HepG2 (cell line): ENCODE measurements at regions of chr1 and their contacts with region 1.

Region 1: DNA sequence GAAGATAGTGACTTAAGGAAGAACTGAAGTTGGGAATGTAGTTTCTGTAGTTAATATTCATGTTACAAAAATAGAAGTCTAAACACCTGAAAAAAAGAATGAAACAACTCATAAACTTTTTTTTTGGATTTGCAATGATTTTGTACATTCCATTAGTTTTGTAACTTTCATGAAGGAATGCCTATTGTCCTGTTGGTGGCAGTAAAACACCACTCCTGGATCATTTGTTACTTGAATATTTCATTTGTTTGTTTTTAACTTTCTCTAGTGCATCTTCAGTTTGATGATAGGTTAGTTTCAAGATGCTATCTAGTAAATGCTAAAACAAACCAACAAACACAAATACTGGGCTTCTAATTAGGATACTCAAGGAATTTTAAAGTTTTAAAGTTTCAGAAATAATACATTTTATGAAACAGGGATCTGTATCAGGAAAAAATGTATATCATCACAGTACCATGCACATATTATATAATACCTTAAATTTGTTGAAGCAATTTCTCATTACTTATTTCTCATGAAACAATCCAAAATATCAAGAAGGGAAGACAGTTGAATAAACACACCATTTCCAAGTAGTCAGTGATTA is 229.7 kb upstream of the CACYBP start:
- DNase-seq: peak; percentile 49
- ATAC-seq: no peak; the same call in 2 of the 3 replicates
- H3K4me3 ChIP-seq: no peak overlapping the region
- H3K27ac ChIP-seq: no peak overlapping the region
- H3K4me1 ChIP-seq: peaks cover 10% of the 10 kb centered on the region; the same call in 1 of the 2 replicates
- H3K27me3 ChIP-seq: no peaks in the 10 kb centered on the region
- CTCF ChIP-seq: peak; percentile 73
- EP300 ChIP-seq: no peak
- POLR2A ChIP-seq: no peak
- RAD21 ChIP-seq: peak; percentile 55; the same call in 1 of the 2 replicates

Region 2: DNA sequence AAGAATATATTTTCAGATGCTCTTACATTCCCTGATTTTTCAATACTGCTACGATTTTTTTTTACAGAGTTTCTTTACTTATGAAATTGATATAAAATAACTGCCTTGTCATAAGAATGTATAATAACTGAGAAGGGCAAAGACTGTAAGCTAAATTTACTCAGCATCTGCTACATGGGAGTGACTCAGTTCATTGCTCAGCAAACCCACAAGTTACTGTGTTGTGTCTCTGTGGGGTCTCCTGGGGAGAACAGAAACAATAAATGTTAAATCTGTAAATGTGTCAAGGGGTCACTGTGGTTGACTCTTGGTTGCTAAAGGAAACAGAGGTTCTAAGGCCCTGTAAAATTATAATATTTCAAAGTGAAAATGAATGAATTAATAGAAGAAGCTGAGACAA is 19.3 kb after region 1 on chr1:
- CTCF ChIA-PET with region 1: no interaction called
- POLR2A ChIA-PET with region 1: no interaction called
- in situ Hi-C with region 1: no loop called
- intact Hi-C with region 1: no loop called
- DNase-seq: no peak
- ATAC-seq: no peak
- H3K4me3 ChIP-seq: no peak overlapping the region
- H3K27ac ChIP-seq: no peak overlapping the region
- H3K4me1 ChIP-seq: no peaks in the 10 kb centered on the region
- H3K27me3 ChIP-seq: no peaks in the 10 kb centered on the region
- CTCF ChIP-seq: no peak
- EP300 ChIP-seq: no peak
- POLR2A ChIP-seq: no peak
- RAD21 ChIP-seq: no peak

Region 3: GRCh38 chr1:174982971-174983689 is 213.1 kb after region 1 on chr1:
- CTCF ChIA-PET with region 1: interaction called, 30 read pairs
- POLR2A ChIA-PET with region 1: no interaction called
- in situ Hi-C with region 1: no loop called
- intact Hi-C with region 1: loop called (anchors 1 kb)
- DNase-seq: peak; percentile 34
- ATAC-seq: no peak
- H3K4me3 ChIP-seq: no peak overlapping the region
- H3K27ac ChIP-seq: no peak overlapping the region
- H3K4me1 ChIP-seq: peaks cover 14% of the 10 kb centered on the region
- H3K27me3 ChIP-seq: no peaks in the 10 kb centered on the region
- CTCF ChIP-seq: peak; percentile 60
- EP300 ChIP-seq: no peak
- POLR2A ChIP-seq: no peak
- RAD21 ChIP-seq: peak; percentile 40; the same call in 1 of the 2 replicates

Region 4: DNA sequence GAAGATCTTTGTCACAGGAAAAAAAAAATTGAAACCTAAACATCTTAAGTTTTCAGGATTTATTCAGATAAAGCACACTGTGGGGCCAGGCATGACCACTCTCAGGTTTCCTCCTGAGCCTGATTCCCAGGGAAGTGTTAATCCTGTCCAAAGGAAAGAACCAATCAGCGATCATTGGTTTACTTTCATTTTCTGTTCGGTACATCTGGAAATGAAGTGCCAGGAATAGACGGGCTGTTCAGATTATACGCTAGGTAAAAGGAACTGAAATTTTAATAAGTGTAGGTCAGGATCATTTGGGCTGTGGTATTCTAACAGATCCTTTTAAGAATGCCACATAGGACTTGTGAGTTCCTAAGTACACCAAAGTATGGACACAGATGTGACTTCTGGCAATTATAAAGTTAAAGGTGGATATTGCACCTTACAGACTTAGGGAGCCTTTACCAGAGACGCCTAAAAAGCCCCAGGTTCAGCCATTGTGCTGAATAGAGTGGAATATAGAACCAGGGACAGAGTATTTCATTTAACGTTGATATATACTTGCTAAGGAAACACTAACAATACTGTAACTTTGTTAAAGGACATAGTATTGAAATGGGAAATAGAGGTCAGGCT is 220.4 kb after region 1 on chr1:
- CTCF ChIA-PET with region 1: no interaction called
- POLR2A ChIA-PET with region 1: no interaction called
- in situ Hi-C with region 1: loop called (anchors 5 kb)
- intact Hi-C with region 1: loop called (anchors 2 kb)
- DNase-seq: peak; percentile 60
- ATAC-seq: peak; percentile 89
- H3K4me3 ChIP-seq: peak overlapping the region; percentile 42 to 58 (median 46); a peak in 5 of 6 replicates
- H3K27ac ChIP-seq: peak overlapping the region; percentile 57
- H3K4me1 ChIP-seq: peaks cover 26% of the 10 kb centered on the region
- H3K27me3 ChIP-seq: no peaks in the 10 kb centered on the region
- CTCF ChIP-seq: no peak
- EP300 ChIP-seq: no peak
- POLR2A ChIP-seq: no peak
- RAD21 ChIP-seq: no peak